ENCODE measurements at regions of chr2 and their contacts with region 1.

Region 1: DNA sequence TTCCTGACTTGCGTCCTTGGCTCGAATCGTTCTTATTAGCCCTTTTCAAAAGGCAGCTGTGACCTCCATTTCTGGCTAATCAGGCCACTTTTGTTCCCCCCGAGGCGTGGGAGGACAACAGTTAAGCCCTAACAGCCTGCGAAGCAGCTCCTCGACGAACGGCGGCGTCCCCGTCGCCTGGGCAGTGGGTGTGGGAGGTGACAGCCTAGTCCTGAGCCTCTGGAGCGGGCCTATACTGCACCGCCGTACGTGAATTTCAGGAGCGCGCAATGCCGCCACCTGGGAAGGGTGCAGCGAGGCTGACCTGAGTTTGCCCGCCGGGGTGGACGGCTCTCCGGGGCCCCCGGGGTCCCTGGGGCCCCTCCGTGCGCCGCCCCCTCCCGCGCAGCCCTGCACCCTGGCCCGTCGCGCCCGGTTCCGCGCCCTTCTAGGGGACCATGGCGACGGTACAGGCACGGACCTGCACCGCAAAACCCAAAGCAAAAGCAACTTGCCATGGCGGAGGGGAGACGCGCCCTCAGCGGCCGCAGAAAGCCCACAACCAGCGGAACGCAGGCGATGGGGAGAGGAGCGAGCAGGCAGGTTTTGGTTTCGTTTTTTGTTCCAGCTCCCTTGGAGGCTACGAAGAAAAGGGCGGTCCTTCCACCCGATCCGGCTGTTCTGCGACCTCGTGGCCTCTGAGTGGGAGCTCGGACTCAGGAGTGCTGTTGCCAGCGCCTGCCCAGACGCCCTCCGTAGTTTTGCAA is at the start of gene RBM43:
- DNase-seq: peak; percentile 91
- ATAC-seq: peak; percentile 91
- H3K4me3 ChIP-seq: peak within 1 kb of the TSS; percentile 71
- H3K27ac ChIP-seq: peak within 1 kb of the TSS; percentile 93
- H3K4me1 ChIP-seq: peaks cover 13% of the 10 kb centered on the region
- H3K27me3 ChIP-seq: no peaks in the 10 kb centered on the region
- CTCF ChIP-seq: no peak
- POLR2A ChIP-seq: peak; percentile 6; the same call in 1 of the 2 replicates
- RAD21 ChIP-seq: no peak; the same call in 1 of the 2 replicates
- total RNA-seq, gene RBM43: 1.6 and 2.5 TPM in 2 replicates

Region 2: DNA sequence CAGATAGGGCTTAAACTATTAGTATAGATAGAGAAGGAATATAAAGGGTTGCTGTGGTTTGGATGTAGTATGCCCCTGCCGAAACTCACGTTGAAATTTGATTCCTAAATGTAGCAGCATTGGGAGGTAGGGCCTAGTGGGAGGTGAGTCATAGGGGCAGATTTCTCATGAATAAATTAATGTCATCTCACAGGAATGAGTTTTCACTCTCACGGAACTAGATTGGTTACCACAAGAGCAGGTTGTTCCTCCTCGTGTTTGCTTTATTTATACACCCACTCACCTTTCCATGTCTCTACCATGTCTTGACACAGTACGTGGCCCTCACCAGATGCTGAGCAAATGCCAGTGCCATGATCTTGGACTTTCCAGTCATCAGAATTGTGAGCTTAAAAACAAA is 217.9 kb before region 1 on chr2:
- CTCF ChIA-PET with region 1: no interaction called
- POLR2A ChIA-PET with region 1: no interaction called
- dilution Hi-C with region 1: no loop called
- in situ Hi-C with region 1: no loop called
- intact Hi-C with region 1: no loop called
- DNase-seq: peak; percentile 91
- ATAC-seq: peak; percentile 74
- H3K4me3 ChIP-seq: no peak overlapping the region
- H3K27ac ChIP-seq: no peak overlapping the region
- H3K4me1 ChIP-seq: 0 out of 2 replicates have a peak, but pooled peaks cover 2% of the 10 kb centered on the region
- H3K27me3 ChIP-seq: no peaks in the 10 kb centered on the region
- CTCF ChIP-seq: no peak
- POLR2A ChIP-seq: no peak
- RAD21 ChIP-seq: no peak

Region 3: DNA sequence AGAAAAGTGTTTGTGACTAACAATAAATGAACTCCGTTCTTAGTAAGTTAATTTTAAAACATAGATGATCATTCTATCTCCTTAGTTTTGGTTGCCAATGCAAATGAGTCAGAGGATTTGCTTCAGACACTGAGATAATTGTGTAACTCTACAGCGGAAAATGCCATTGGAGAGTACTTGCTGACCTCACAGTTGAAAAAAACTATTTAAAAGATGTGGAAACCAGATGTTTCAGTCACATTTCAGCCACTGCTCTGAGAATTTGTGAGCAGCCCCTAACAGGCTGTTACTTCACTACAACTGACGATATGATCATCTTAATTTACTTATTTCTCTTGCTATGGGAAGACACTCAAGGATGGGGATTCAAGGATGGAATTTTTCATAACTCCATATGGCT is 96.0 kb after region 1 on chr2 and contains the start of gene TNFAIP6:
- CTCF ChIA-PET with region 1: no interaction called
- POLR2A ChIA-PET with region 1: no interaction called
- dilution Hi-C with region 1: no loop called
- in situ Hi-C with region 1: no loop called
- intact Hi-C with region 1: loop called (anchors 2 kb)
- DNase-seq: peak; percentile 97
- ATAC-seq: peak; percentile 86
- H3K4me3 ChIP-seq: peak within 1 kb of the TSS; percentile 10
- H3K27ac ChIP-seq: peak within 1 kb of the TSS; percentile 58; the same call in 1 of the 2 replicates
- H3K4me1 ChIP-seq: peaks cover 3% of the 10 kb centered on the region
- H3K27me3 ChIP-seq: no peaks in the 10 kb centered on the region
- CTCF ChIP-seq: no peak
- POLR2A ChIP-seq: peak; percentile 95
- RAD21 ChIP-seq: no peak
- total RNA-seq, gene TNFAIP6: 2.2 and 2.9 TPM in 2 replicates

Region 4: DNA sequence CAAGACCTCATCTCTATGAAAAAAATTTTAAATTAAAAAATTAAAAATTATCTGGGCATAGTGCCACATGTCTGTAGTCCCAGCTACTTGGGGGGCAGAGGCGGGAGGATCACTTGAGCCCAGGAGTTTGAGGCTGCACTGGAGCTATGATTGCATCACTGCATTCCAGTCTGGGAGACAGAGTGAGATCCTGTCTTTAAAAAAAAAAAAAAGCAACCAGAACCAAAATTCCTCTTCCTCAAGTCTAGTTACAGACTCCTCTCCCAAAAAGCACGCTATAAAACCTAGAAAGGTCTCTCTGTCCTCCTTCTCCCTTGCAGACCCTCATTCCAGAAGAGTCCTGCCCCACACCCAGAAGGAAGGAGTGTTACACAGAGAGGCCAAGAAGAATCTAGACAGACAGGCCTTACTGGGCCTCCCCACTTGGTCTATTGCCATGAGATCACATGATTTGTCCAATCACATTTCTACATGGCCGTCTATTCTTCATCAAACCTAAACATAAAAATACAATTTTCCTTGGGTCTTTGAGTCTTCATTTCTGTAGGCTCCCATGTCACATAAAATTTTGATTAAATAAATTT is 120.0 kb after region 1 on chr2:
- CTCF ChIA-PET with region 1: no interaction called
- POLR2A ChIA-PET with region 1: no interaction called
- dilution Hi-C with region 1: no loop called
- in situ Hi-C with region 1: no loop called
- intact Hi-C with region 1: loop called (anchors 1 kb)
- DNase-seq: peak; percentile 65
- ATAC-seq: peak; percentile 60
- H3K4me3 ChIP-seq: no peak overlapping the region
- H3K27ac ChIP-seq: peak overlapping the region; percentile 67; the same call in 1 of the 2 replicates
- H3K4me1 ChIP-seq: peaks cover 4% of the 10 kb centered on the region
- H3K27me3 ChIP-seq: no peaks in the 10 kb centered on the region
- CTCF ChIP-seq: no peak
- POLR2A ChIP-seq: no peak
- RAD21 ChIP-seq: no peak

Region 5: DNA sequence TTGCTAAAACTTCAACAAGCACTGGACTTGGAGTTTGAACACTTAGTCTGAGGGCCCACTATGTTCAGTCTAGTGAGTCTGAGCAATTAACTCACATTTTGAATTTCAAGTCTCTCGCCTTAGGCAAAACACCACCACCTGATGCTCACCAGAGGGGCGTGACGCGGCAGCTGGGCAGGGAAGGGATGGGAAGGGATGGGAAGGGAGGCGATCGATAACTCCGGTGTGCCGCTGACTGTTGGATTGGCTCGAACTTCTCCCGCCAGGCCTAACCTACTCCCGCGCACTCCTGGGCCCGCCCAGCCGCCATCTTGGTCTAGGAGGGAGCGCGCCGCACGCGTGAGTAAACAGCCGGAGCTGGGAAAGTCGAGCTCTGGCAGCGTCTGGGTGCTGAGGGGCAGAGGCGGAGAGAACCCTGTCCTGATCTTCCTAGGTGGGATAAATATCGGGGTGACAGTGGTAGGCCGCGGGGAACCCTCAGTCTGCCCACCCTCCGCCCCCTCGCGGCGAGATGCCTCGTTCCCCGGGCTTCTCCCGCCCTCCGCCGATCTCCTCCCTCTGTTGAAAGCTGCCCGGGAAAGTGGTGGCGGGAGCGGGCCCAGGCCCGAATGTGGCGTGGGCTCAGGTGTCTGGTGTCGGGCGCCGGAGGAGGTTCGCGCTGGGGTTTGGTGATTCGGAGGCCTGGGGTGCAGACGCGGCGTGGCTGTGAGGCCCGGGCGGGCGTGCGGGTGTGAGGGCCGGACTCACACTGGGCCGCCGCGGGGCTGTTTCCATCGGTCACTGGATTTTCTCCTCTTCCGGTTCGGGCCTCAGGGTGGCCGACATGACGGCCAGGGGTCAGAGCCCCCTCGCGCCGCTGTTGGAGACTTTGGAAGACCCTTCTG is 148.4 kb after region 1 on chr2 and contains the start of gene RIF1:
- CTCF ChIA-PET with region 1: no interaction called
- POLR2A ChIA-PET with region 1: interaction called, 14 read pairs
- dilution Hi-C with region 1: no loop called
- in situ Hi-C with region 1: loop called (anchors 10 kb)
- intact Hi-C with region 1: loop called (anchors 1 kb)
- DNase-seq: peak; percentile 93
- ATAC-seq: peak; percentile 98
- H3K4me3 ChIP-seq: peak within 1 kb of the TSS; percentile 87
- H3K27ac ChIP-seq: peak within 1 kb of the TSS; percentile 91
- H3K4me1 ChIP-seq: no peaks in the 10 kb centered on the region
- H3K27me3 ChIP-seq: no peaks in the 10 kb centered on the region
- CTCF ChIP-seq: peak; percentile 54
- POLR2A ChIP-seq: peak; percentile 72; the same call in 1 of the 2 replicates
- RAD21 ChIP-seq: no peak; the same call in 1 of the 2 replicates
- total RNA-seq, gene RIF1: 43.9 and 53.6 TPM in 2 replicates

Region 6: GRCh38 chr2:151437630-151438029 is 176.2 kb after region 1 on chr2:
- CTCF ChIA-PET with region 1: interaction called, 3 read pairs
- POLR2A ChIA-PET with region 1: no interaction called
- dilution Hi-C with region 1: no loop called
- in situ Hi-C with region 1: no loop called
- intact Hi-C with region 1: loop called (anchors 1 kb)
- DNase-seq: peak; percentile 18
- ATAC-seq: peak; percentile 70; the same call in 1 of the 2 replicates
- H3K4me3 ChIP-seq: no peak overlapping the region
- H3K27ac ChIP-seq: no peak overlapping the region
- H3K4me1 ChIP-seq: no peaks in the 10 kb centered on the region
- H3K27me3 ChIP-seq: no peaks in the 10 kb centered on the region
- CTCF ChIP-seq: peak; percentile 50
- POLR2A ChIP-seq: no peak
- RAD21 ChIP-seq: 0 out of 2 replicates have a peak, but pooled peaks have one; percentile 18

Region 7: GRCh38 chr2:151518802-151519201 is 257.4 kb after region 1 on chr2:
- CTCF ChIA-PET with region 1: no interaction called
- POLR2A ChIA-PET with region 1: no interaction called
- dilution Hi-C with region 1: no loop called
- in situ Hi-C with region 1: no loop called
- intact Hi-C with region 1: no loop called
- DNase-seq: peak; percentile 10
- ATAC-seq: no peak
- H3K4me3 ChIP-seq: no peak overlapping the region
- H3K27ac ChIP-seq: no peak overlapping the region
- H3K4me1 ChIP-seq: no peaks in the 10 kb centered on the region
- H3K27me3 ChIP-seq: no peaks in the 10 kb centered on the region
- CTCF ChIP-seq: no peak
- POLR2A ChIP-seq: no peak
- RAD21 ChIP-seq: no peak

Measured in IMR-90 (cell line).